ENCODE measurements at regions of chrX and their contacts with region 1.

Region 1: DNA sequence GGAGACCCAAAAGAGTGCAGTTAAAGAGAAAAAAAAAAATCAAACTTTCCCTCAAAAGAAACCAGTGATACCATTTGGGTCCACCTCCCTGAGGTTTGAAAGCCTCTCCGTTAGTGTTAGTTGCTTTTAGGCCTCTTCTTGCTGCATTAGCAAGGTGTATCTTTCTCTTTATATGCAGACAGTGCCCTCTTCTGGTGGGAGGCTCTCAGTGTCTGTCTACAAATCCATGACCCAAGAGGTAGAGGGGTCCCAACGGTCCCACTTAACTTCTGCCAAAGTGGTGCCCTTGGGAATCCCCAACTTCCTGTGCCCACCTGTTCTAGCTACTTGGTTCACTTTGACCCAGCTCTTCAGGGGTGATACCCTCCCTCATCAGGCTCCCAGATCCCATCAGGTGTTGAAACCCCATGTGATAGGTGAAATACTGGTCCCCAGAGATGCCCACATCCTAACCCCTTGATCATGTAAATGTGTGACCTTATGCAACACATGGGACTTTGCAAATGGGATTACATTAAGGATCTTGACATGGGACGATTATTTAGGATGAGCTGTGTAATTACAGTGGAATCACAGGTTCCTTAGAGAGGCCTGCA is 63.7 kb upstream of the CD99 start:
- DNase-seq: peak in 9 of 14 experiments; percentile 22 to 69 (median 44)
- ATAC-seq: no peak
- H3K4me3 ChIP-seq: no peak overlapping the region
- H3K4me3 Mint-ChIP-seq: no peak overlapping the region
- H3K27ac ChIP-seq: no peak overlapping the region
- H3K27ac Mint-ChIP-seq: peak overlapping the region; percentile 54
- H3K4me1 ChIP-seq: peaks cover 8% of the 10 kb centered on the region
- H3K4me1 Mint-ChIP-seq: peaks cover 38% of the 10 kb centered on the region
- H3K27me3 ChIP-seq: no peaks in the 10 kb centered on the region
- H3K27me3 Mint-ChIP-seq: no peaks in the 10 kb centered on the region
- CTCF ChIP-seq: peak; percentile 46

Region 2: DNA sequence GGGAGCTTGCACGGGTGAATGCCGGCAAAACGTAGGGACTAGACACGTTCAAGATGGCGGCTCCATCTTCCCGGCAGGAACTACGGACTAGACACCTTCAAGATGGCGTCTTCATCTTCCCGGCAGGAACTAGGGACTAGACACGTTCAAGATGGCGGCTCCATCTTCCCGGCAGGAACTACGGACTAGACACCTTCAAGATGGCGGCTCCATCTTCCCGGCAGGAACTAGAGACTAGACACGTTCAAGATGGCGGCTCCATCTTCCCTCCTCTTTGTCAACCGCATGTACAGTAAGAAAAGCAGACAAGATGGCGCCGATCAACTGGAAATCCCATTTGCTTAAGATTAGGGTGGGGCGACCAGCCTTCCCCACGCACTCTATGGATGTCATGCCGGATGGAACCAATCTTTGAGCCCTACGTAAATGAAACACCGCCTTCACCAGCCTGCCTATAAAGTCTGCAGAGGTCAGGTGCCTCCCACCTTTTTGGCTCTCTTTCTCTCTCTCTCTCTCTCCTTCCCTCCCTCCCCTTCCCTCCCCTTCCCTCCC is 1637.3 kb before region 1 on chrX:
- CTCF ChIA-PET with region 1: no interaction called
- POLR2A ChIA-PET with region 1: no interaction called
- intact Hi-C with region 1: loop called in 1 of 2 experiments (anchors 5 kb)
- DNase-seq: peak in 9 of 14 experiments; percentile 38 to 93 (median 72)
- ATAC-seq: peak; percentile 96
- H3K4me3 ChIP-seq: peak overlapping the region; percentile 37
- H3K4me3 Mint-ChIP-seq: peak overlapping the region; percentile 86
- H3K27ac ChIP-seq: peak overlapping the region; percentile 34 to 46
- H3K27ac Mint-ChIP-seq: peak overlapping the region; percentile 87
- H3K4me1 ChIP-seq: peaks cover 2% of the 10 kb centered on the region
- H3K4me1 Mint-ChIP-seq: peaks cover 8% of the 10 kb centered on the region
- H3K27me3 ChIP-seq: no peaks in the 10 kb centered on the region
- H3K27me3 Mint-ChIP-seq: no peaks in the 10 kb centered on the region
- CTCF ChIP-seq: no peak

Region 3: GRCh38 chrX:1649621-1650020 is 977.7 kb before region 1 on chrX:
- CTCF ChIA-PET with region 1: no interaction called
- POLR2A ChIA-PET with region 1: no interaction called
- intact Hi-C with region 1: loop called in 1 of 2 experiments (anchors 5 kb)
- DNase-seq: no peak
- ATAC-seq: no peak
- H3K4me3 ChIP-seq: no peak overlapping the region
- H3K4me3 Mint-ChIP-seq: no peak overlapping the region
- H3K27ac ChIP-seq: no peak overlapping the region
- H3K27ac Mint-ChIP-seq: no peak overlapping the region
- H3K4me1 ChIP-seq: peaks cover 9% of the 10 kb centered on the region
- H3K4me1 Mint-ChIP-seq: peaks cover 4% of the 10 kb centered on the region
- H3K27me3 ChIP-seq: peaks cover 0 to 3% of the 10 kb centered on the region in 2 experiments
- H3K27me3 Mint-ChIP-seq: peaks cover 5% of the 10 kb centered on the region
- CTCF ChIP-seq: no peak

Region 4: GRCh38 chrX:2608638-2609430 is 18.5 kb before region 1 on chrX:
- CTCF ChIA-PET with region 1: no interaction called
- POLR2A ChIA-PET with region 1: no interaction called
- intact Hi-C with region 1: loop called (anchors 2 kb)
- DNase-seq: peak; percentile 73 to 94 (median 84)
- ATAC-seq: peak; percentile 94
- H3K4me3 ChIP-seq: peak overlapping the region; percentile 96
- H3K4me3 Mint-ChIP-seq: peak overlapping the region; percentile 98
- H3K27ac ChIP-seq: peak overlapping the region; percentile 14 to 43
- H3K27ac Mint-ChIP-seq: peak overlapping the region; percentile 82
- H3K4me1 ChIP-seq: peaks cover 34% of the 10 kb centered on the region
- H3K4me1 Mint-ChIP-seq: peaks cover 63% of the 10 kb centered on the region
- H3K27me3 ChIP-seq: no peaks in the 10 kb centered on the region
- H3K27me3 Mint-ChIP-seq: no peaks in the 10 kb centered on the region
- CTCF ChIP-seq: no peak

Region 5: GRCh38 chrX:2665387-2666304 is 38.3 kb after region 1 on chrX:
- CTCF ChIA-PET with region 1: no interaction called
- POLR2A ChIA-PET with region 1: no interaction called
- intact Hi-C with region 1: no loop called
- DNase-seq: no peak
- ATAC-seq: no peak
- H3K4me3 ChIP-seq: no peak overlapping the region
- H3K4me3 Mint-ChIP-seq: no peak overlapping the region
- H3K27ac ChIP-seq: no peak overlapping the region
- H3K27ac Mint-ChIP-seq: no peak overlapping the region
- H3K4me1 ChIP-seq: no peaks in the 10 kb centered on the region
- H3K4me1 Mint-ChIP-seq: no peaks in the 10 kb centered on the region
- H3K27me3 ChIP-seq: no peaks in the 10 kb centered on the region
- H3K27me3 Mint-ChIP-seq: no peaks in the 10 kb centered on the region
- CTCF ChIP-seq: no peak

Region 6: GRCh38 chrX:2690856-2691542 is 63.6 kb after region 1 on chrX and contains the start of gene CD99:
- CTCF ChIA-PET with region 1: no interaction called
- POLR2A ChIA-PET with region 1: no interaction called
- intact Hi-C with region 1: loop called in 1 of 2 experiments (anchors 5 kb)
- DNase-seq: peak; percentile 79 to 96 (median 89)
- ATAC-seq: peak; percentile 85
- H3K4me3 ChIP-seq: peak within 1 kb of the TSS; percentile 96
- H3K4me3 Mint-ChIP-seq: peak within 1 kb of the TSS; percentile 95
- H3K27ac ChIP-seq: peak within 1 kb of the TSS; percentile 61 to 62
- H3K27ac Mint-ChIP-seq: peak within 1 kb of the TSS; percentile 83
- H3K4me1 ChIP-seq: peaks cover 47% of the 10 kb centered on the region
- H3K4me1 Mint-ChIP-seq: peaks cover 40% of the 10 kb centered on the region
- H3K27me3 ChIP-seq: no peaks in the 10 kb centered on the region
- H3K27me3 Mint-ChIP-seq: no peaks in the 10 kb centered on the region
- CTCF ChIP-seq: no peak
- total RNA-seq, gene CD99: 170 to 184 TPM

Region 7: DNA sequence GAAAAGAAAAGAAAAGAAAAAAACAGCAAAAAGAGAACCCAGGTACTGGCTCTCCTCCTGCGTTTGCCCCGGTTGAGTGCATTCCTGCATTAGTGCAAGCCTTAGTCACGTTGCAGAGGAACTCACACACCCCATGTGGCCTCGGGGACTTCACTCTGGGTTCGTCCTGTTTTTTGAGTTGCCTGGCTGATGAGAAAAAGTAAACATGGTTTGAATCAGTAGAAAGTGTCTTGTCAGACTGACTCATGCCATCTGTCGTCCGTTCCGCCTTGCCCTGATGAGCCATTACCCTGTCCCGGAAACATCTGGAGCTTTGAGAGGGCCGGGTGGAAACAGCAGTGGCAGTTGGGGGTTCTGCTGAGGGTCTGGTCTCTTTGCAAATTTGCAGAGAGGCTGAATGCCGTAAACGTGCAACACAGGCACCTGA is 80.0 kb after region 1 on chrX:
- CTCF ChIA-PET with region 1: no interaction called
- POLR2A ChIA-PET with region 1: no interaction called
- intact Hi-C with region 1: loop called in 1 of 2 experiments (anchors 5 kb)
- DNase-seq: peak in 13 of 14 experiments; percentile 28 to 80 (median 46)
- ATAC-seq: peak; percentile 28
- H3K4me3 ChIP-seq: no peak overlapping the region
- H3K4me3 Mint-ChIP-seq: peak overlapping the region; percentile 20
- H3K27ac ChIP-seq: peak overlapping the region in 1 of 2 donors; percentile 24
- H3K27ac Mint-ChIP-seq: peak overlapping the region; percentile 85
- H3K4me1 ChIP-seq: peaks cover 78% of the 10 kb centered on the region
- H3K4me1 Mint-ChIP-seq: peaks cover 74% of the 10 kb centered on the region
- H3K27me3 ChIP-seq: no peaks in the 10 kb centered on the region
- H3K27me3 Mint-ChIP-seq: no peaks in the 10 kb centered on the region
- CTCF ChIP-seq: no peak

Measured in CD4-positive, alpha-beta T cell (primary cell).